ENCODE measurements at regions of chr17 and their contacts with region 1.

Region 1: DNA sequence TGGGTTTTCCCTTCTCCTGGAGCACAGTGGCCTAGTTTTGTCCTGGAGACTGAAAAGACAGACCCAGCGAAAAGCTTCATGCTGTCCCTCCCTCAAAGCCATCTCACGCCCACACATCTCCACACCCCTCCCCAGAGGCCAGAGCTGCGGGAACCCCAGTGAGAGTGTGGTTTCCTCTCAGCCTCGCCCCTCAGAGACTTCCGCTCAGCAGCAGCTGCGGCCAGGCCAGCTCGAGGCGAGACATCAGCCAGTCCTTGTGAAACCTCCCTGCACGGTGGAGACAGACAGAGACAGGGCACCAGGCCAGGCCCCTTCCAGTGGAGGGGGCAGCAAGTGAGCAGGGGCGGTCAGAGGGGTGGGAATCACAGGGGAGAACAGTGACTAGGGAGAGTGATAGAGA is 77.0 kb upstream of the TNRC6C start:
- DNase-seq: peak; percentile 85 to 89
- ATAC-seq: peak; percentile 59 to 82 (median 79)
- H3K4me3 ChIP-seq: peak overlapping the region; percentile 29
- H3K4me3 Mint-ChIP-seq: peak overlapping the region; percentile 87
- H3K27ac ChIP-seq: peak overlapping the region; percentile 90
- H3K27ac Mint-ChIP-seq: peak overlapping the region; percentile 94 to 97
- H3K4me1 ChIP-seq: peaks cover 73% of the 10 kb centered on the region
- H3K4me1 Mint-ChIP-seq: peaks cover 72 to 80% of the 10 kb centered on the region in 2 donors
- H3K27me3 ChIP-seq: no peaks in the 10 kb centered on the region
- H3K27me3 Mint-ChIP-seq: no peaks in the 10 kb centered on the region
- CTCF ChIP-seq: no peak

Region 2: DNA sequence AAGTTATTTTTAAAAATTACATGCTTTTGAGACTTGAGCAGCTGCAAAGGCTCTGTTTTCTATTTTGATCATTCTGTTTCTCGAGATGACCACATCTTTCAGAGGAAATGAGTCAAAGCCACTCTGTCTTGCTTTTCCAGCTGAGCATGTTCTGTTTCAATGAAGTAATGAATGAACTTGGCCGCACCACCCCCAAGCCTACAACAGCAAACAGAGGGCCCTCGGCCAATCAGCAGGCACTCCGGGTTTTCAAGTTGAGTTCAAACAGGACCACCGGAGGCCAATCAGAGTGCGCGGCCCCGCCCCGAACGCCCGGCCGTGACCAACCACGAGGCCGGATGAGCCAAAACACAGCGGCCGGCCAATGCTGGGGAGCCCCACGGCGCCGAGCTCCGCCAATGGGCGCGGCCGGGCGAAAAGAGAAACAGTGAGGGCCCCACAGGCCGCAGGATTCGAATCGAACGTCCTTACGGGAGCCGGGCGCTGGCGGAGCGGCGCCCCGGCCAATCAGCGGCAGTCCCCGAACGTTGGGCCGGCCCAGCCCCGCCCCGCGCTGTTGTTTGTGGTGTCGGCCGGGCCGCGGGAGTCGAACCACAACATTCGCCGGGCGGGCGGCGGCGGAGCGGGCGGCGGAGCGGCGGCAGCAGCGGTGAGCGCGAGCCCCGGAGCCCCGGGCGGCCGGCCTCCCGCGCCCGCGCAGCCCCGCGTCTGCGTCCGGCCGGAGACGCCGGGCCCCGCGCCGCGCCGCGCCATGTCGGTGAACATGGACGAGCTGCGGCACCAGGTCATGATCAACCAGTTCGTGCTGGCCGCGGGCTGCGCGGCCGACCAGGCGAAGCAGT is 1616.6 kb before region 1 on chr17 and contains the start of gene UBALD2:
- intact Hi-C with region 1: loop called (anchors 10 kb)
- DNase-seq: peak; percentile 98 to 99
- ATAC-seq: peak; percentile 72 to 92 (median 82)
- H3K4me3 ChIP-seq: peak within 1 kb of the TSS; percentile 61
- H3K4me3 Mint-ChIP-seq: peak within 1 kb of the TSS; percentile 94
- H3K27ac ChIP-seq: peak within 1 kb of the TSS; percentile 77
- H3K27ac Mint-ChIP-seq: peak within 1 kb of the TSS; percentile 99
- H3K4me1 ChIP-seq: peaks cover 74% of the 10 kb centered on the region
- H3K4me1 Mint-ChIP-seq: peaks cover 60% of the 10 kb centered on the region in 2 donors
- H3K27me3 ChIP-seq: no peaks in the 10 kb centered on the region
- H3K27me3 Mint-ChIP-seq: no peaks in the 10 kb centered on the region
- CTCF ChIP-seq: no peak
- total RNA-seq, gene UBALD2: 171 to 287 (median 189) TPM

Region 3: GRCh38 chr17:77088455-77089123 is 793.0 kb before region 1 on chr17:
- intact Hi-C with region 1: no loop called
- DNase-seq: peak; percentile 85 to 94
- ATAC-seq: peak; percentile 90 to 96 (median 95)
- H3K4me3 ChIP-seq: peak overlapping the region; percentile 83
- H3K4me3 Mint-ChIP-seq: peak overlapping the region; percentile 91
- H3K27ac ChIP-seq: peak overlapping the region; percentile 88
- H3K27ac Mint-ChIP-seq: peak overlapping the region; percentile 96 to 99
- H3K4me1 ChIP-seq: peaks cover 38% of the 10 kb centered on the region
- H3K4me1 Mint-ChIP-seq: peaks cover 32 to 38% of the 10 kb centered on the region in 2 donors
- H3K27me3 ChIP-seq: no peaks in the 10 kb centered on the region
- H3K27me3 Mint-ChIP-seq: peaks cover 0 to 8% of the 10 kb centered on the region in 2 donors
- CTCF ChIP-seq: peak; percentile 75

Region 4: DNA sequence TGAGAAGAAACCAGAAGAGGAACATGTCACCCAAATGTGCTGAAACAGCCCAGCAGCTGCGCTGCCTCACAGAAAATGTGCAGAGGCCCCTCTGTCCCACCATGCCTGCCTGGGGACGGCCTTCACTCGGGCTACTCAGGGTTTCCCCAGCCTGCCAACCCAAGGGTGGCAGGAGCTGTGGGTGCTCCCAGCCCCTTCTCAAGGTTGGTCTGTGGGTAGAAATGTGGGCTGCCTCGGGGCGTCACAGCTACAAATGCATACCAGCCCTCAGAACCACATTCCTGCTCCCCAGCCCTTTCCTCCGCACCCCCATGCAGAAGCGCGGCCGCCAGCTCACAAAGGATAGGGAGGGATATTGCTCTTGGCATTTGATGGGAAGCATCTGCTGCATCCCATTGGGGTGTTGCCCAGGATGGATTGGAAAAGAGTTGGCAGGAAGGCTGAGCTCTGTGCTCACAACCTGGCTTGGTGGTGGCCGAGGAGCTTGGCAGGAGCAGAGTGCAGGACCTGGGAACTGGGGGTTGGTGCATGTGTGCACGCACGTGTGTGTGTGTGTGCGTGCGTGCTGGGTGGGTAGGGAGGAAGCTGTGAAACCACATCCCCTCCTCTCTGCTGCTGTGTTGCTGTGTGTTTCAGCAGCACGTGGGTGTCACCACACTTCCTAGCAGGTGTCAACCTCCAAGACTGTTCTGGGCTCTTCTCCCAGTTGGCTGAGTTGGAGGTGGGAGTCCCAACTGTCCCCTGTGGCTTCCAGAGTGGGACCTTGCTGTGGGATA is 436.4 kb before region 1 on chr17:
- intact Hi-C with region 1: loop called (anchors 10 kb)
- DNase-seq: peak; percentile 77 to 98
- ATAC-seq: peak; percentile 61 to 84 (median 72)
- H3K4me3 ChIP-seq: peak overlapping the region; percentile 27
- H3K4me3 Mint-ChIP-seq: peak overlapping the region; percentile 67
- H3K27ac ChIP-seq: peak overlapping the region; percentile 90
- H3K27ac Mint-ChIP-seq: peak overlapping the region; percentile 86
- H3K4me1 ChIP-seq: peaks cover 98% of the 10 kb centered on the region
- H3K4me1 Mint-ChIP-seq: peaks cover 74 to 87% of the 10 kb centered on the region in 2 donors
- H3K27me3 ChIP-seq: no peaks in the 10 kb centered on the region
- H3K27me3 Mint-ChIP-seq: no peaks in the 10 kb centered on the region
- CTCF ChIP-seq: no peak

Region 5: GRCh38 chr17:77834170-77835115 is 47.1 kb before region 1 on chr17:
- intact Hi-C with region 1: loop called (anchors 1 kb)
- DNase-seq: peak; percentile 72 to 74
- ATAC-seq: peak; percentile 75 to 86 (median 85)
- H3K4me3 ChIP-seq: no peak overlapping the region
- H3K4me3 Mint-ChIP-seq: peak overlapping the region; percentile 45
- H3K27ac ChIP-seq: no peak overlapping the region
- H3K27ac Mint-ChIP-seq: peak overlapping the region; percentile 7 to 88
- H3K4me1 ChIP-seq: peaks cover 54% of the 10 kb centered on the region
- H3K4me1 Mint-ChIP-seq: peaks cover 41 to 43% of the 10 kb centered on the region in 2 donors
- H3K27me3 ChIP-seq: no peaks in the 10 kb centered on the region
- H3K27me3 Mint-ChIP-seq: peaks cover 12 to 19% of the 10 kb centered on the region in 2 donors
- CTCF ChIP-seq: no peak

Region 6: GRCh38 chr17:77863814-77864161 is 17.8 kb before region 1 on chr17:
- intact Hi-C with region 1: loop called (anchors 2 kb)
- DNase-seq: no peak
- ATAC-seq: peak; percentile 79 to 89 (median 84)
- H3K4me3 ChIP-seq: peak overlapping the region; percentile 38
- H3K4me3 Mint-ChIP-seq: peak overlapping the region; percentile 92
- H3K27ac ChIP-seq: peak overlapping the region; percentile 86
- H3K27ac Mint-ChIP-seq: peak overlapping the region; percentile 92 to 93
- H3K4me1 ChIP-seq: peaks cover 63% of the 10 kb centered on the region
- H3K4me1 Mint-ChIP-seq: peaks cover 54 to 66% of the 10 kb centered on the region in 2 donors
- H3K27me3 ChIP-seq: no peaks in the 10 kb centered on the region
- H3K27me3 Mint-ChIP-seq: no peaks in the 10 kb centered on the region
- CTCF ChIP-seq: no peak